ENCODE measurements at regions of chr12 and their contacts with region 1.

Region 1: GRCh38 chr12:122078141-122079032 is at the start of gene MLXIP:
- DNase-seq: peak; percentile 94
- ATAC-seq: peak; percentile 83 to 86
- H3K4me3 ChIP-seq: peak within 1 kb of the TSS; percentile 94
- H3K27ac ChIP-seq: peak within 1 kb of the TSS; percentile 88 to 98
- H3K4me1 ChIP-seq: peaks cover 46% of the 10 kb centered on the region
- CTCF ChIP-seq: no peak
- EP300 ChIP-seq: no peak
- POLR2A ChIP-seq: peak; percentile 67
- RAD21 ChIP-seq: no peak
- polyA plus RNA-seq, gene MLXIP: 7.0 and 11.6 TPM in 2 replicates

Region 2: GRCh38 chr12:122003651-122004611 is 74.5 kb before region 1 on chr12:
- CTCF ChIA-PET with region 1: no interaction called
- POLR2A ChIA-PET with region 1: no interaction called
- DNase-seq: no peak
- ATAC-seq: no peak
- H3K4me3 ChIP-seq: no peak overlapping the region
- H3K27ac ChIP-seq: no peak overlapping the region
- H3K4me1 ChIP-seq: no peaks in the 10 kb centered on the region
- CTCF ChIP-seq: no peak
- EP300 ChIP-seq: no peak
- POLR2A ChIP-seq: no peak
- RAD21 ChIP-seq: no peak

Region 3: DNA sequence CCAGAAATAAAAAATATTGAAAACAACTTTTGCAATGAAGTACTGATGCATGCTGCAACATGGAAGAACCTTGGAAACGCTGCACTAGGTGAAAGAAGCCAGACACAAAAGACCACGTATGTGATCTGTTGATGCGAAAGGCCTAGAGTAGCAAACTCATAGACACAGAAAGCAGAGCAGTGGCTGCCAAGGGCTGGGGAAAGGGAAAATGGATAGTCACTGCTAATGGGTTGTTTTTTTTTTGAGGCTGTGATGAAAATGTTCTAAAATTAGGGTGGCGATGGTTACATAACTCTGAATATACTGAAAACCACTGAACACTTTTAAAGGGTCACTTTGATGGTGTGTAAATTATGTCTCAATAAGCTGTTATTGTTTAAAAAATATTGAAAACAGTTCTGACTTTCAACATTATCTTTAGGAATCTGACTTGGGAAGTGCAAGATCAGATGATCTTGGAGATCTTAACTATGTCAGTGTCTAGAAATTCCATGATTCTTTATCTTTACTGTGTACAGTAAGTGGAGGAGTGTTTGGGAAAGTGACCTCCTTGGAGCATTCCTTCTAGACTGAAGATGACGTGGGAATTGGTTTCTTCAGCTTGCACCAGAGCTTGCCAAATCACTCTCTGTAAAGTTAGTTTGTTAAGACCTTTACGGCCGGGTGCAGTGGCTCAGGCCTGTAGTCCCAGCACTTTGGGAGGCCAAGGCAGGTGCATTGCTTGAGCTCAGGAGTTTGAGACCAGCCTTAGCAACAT is 12.6 kb after region 1 on chr12:
- CTCF ChIA-PET with region 1: interaction called, 12 read pairs
- POLR2A ChIA-PET with region 1: interaction called, 14 read pairs
- DNase-seq: peak in 1 of 2 experiments; percentile 86
- ATAC-seq: peak; percentile 76
- H3K4me3 ChIP-seq: no peak overlapping the region
- H3K27ac ChIP-seq: peak overlapping the region; percentile 76
- H3K4me1 ChIP-seq: peaks cover 66% of the 10 kb centered on the region
- CTCF ChIP-seq: no peak
- EP300 ChIP-seq: peak; percentile 84 to 87; a peak in 4 of 5 replicates
- POLR2A ChIP-seq: no peak
- RAD21 ChIP-seq: no peak

Region 4: GRCh38 chr12:122097927-122098756 is 19.8 kb after region 1 on chr12:
- CTCF ChIA-PET with region 1: interaction called, 12 read pairs
- POLR2A ChIA-PET with region 1: interaction called, 11 read pairs
- DNase-seq: peak; percentile 66 to 92
- ATAC-seq: peak; percentile 86 to 93
- H3K4me3 ChIP-seq: 0 out of 3 replicates have a peak overlapping the region, but pooled peaks have one; percentile 12
- H3K27ac ChIP-seq: peak overlapping the region; percentile 81 to 88
- H3K4me1 ChIP-seq: peaks cover 63% of the 10 kb centered on the region
- CTCF ChIP-seq: no peak
- EP300 ChIP-seq: no peak
- POLR2A ChIP-seq: no peak
- RAD21 ChIP-seq: no peak

Region 5: GRCh38 chr12:122159882-122160281 is 81.5 kb after region 1 on chr12:
- CTCF ChIA-PET with region 1: no interaction called
- POLR2A ChIA-PET with region 1: no interaction called
- DNase-seq: no peak
- ATAC-seq: peak in 1 of 2 experiments; percentile 45; a peak in 3 of 6 replicates
- H3K4me3 ChIP-seq: no peak overlapping the region
- H3K27ac ChIP-seq: no peak overlapping the region
- H3K4me1 ChIP-seq: no peaks in the 10 kb centered on the region
- CTCF ChIP-seq: no peak
- EP300 ChIP-seq: no peak
- POLR2A ChIP-seq: no peak
- RAD21 ChIP-seq: peak in 1 of 2 experiments; percentile 11; a peak in 1 of 5 replicates

Region 6: DNA sequence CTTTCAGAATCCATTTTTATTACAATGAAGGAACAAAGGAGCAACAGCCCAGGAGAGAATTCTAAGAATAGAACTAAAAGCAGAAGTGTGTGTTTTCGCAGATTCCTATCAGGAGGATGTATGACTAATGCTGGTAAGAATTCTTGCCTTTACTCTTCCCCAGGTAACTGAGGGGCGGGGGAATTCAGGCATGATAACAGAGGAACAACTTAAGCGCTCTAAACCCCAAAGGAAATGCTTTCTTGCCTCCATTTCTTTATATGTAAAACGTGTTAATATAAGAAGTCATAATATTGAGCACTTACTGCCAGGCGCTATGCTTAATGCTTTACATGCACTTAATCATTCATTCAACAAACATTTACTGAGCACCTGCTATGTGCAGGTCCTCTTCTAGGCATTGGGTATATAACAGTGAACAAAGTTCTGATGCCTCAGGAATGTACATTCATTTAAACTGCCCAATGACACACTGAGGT is 647.7 kb after region 1 on chr12:
- CTCF ChIA-PET with region 1: no interaction called
- POLR2A ChIA-PET with region 1: no interaction called
- DNase-seq: peak in 1 of 2 experiments; percentile 24
- ATAC-seq: peak in 1 of 2 experiments; percentile 19; a peak in 1 of 6 replicates
- H3K4me3 ChIP-seq: no peak overlapping the region
- H3K27ac ChIP-seq: peak overlapping the region in 1 of 2 experiments; percentile 25; a peak in 2 of 6 replicates
- H3K4me1 ChIP-seq: peaks cover 10% of the 10 kb centered on the region
- CTCF ChIP-seq: no peak
- EP300 ChIP-seq: no peak
- POLR2A ChIP-seq: no peak
- RAD21 ChIP-seq: no peak

Measured in A549 (cell line).